Activated CD4-positive, alpha-beta T cell treated with anti-CD3 and anti-CD28 coated beads, Interleukin-2, amount 10 ng/mL, durations not matched to agents 24 days and 14 days (primary cell): ENCODE measurements at regions of chr20 and their contacts with region 1.

Region 1: GRCh38 chr20:3767427-3768341 is at the start of gene ADISSP:
- DNase-seq: peak; percentile 99
- H3K4me3 Mint-ChIP-seq: peak within 1 kb of the TSS; percentile 81
- H3K27ac Mint-ChIP-seq: peak within 1 kb of the TSS; percentile 97
- H3K4me1 Mint-ChIP-seq: peaks cover 22% of the 10 kb centered on the region
- H3K27me3 Mint-ChIP-seq: peaks cover 9% of the 10 kb centered on the region
- total RNA-seq, gene ADISSP: 62.9 and 68.8 TPM in 2 replicates

Region 2: DNA sequence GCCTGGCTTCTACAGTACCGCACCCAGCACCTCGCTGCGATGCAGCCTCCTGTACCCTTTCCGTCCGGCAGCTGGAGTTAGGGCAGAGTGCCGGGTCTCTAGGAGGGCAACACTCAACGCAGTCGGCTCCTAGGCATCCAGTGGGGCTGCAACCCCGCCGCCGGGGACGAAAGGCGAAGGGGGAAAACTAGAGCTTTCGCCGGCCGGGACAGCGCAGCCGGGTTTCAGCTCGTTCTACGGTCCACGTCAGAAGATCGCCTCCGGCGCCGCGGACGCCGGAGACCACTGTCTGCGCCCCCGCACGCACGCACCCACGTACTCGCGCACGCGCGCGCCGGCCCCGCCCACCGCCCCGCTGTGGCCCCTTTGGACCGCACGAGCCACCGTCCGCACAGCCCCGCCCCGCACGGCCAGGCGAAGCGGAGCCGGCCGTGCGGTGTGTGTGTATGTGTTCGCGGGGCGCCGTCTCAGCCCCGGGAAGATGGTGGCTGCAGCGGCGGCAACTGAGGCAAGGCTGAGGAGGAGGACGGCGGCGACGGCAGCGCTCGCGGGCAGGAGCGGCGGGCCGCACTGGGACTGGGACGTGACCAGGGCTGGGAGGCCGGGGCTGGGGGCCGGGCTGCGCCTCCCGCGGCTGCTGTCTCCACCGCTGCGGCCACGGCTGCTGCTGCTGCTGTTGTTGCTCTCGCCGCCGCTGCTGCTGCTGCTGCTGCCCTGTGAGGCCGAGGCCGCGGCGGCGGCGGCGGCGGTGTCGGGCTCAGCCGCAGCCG is 296.9 kb before region 1 on chr20 and contains the start of gene ATRN:
- intact Hi-C with region 1: loop called (anchors 5 kb)
- DNase-seq: peak; percentile 97
- H3K4me3 Mint-ChIP-seq: peak within 1 kb of the TSS; percentile 95
- H3K27ac Mint-ChIP-seq: peak within 1 kb of the TSS; percentile 79
- H3K4me1 Mint-ChIP-seq: peaks cover 26% of the 10 kb centered on the region
- H3K27me3 Mint-ChIP-seq: peaks cover 15% of the 10 kb centered on the region
- total RNA-seq, gene ATRN: 11.8 and 12.1 TPM in 2 replicates

Region 3: GRCh38 chr20:3572151-3572550 is 195.5 kb before region 1 on chr20:
- intact Hi-C with region 1: no loop called
- DNase-seq: no peak
- H3K4me3 Mint-ChIP-seq: no peak overlapping the region
- H3K27ac Mint-ChIP-seq: no peak overlapping the region
- H3K4me1 Mint-ChIP-seq: no peaks in the 10 kb centered on the region
- H3K27me3 Mint-ChIP-seq: no peaks in the 10 kb centered on the region

Region 4: DNA sequence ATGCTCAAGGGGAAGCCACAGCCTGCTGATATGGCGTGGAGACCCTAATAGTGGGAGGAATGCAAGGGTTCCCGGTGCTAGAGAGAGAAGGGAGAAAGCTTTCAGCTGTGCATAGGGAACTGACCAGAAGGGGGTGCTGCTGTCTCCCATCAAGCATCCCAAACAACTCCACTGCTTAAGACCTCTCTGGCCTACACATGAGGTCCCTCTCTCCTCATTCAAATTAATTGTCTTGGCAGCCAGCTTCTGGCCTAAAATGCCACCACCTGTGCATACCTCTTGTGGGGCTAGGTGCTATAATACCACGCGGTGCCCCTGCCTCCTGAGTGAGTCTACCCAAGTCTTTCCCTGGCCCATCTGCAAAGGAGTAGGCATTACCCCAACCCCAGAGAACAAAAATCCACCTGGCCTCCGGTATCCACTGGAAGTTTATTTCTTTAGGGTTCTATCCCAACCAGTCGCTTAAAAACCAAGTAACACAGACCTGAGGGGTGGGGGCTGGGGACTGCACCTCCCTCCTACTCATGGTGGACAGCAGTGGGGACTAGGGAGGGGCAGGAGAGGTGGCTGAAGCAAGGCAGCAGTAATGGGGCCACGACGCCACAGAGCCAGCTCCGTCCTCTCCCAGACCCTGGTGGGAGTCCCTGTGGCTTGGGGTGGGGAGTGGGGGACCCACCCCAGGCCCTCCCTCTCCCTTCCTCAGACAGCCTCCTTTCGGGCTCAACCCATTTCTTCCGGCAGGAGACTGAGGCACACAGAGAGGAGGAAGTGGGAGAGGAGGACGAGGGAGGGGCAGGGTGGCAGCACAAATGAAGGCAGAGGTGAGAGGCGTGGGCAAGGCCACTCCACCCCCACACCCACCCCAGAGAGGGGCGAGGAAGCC is 14.3 kb before region 1 on chr20:
- intact Hi-C with region 1: loop called (anchors 2 kb)
- DNase-seq: peak; percentile 88
- H3K4me3 Mint-ChIP-seq: no peak overlapping the region
- H3K27ac Mint-ChIP-seq: no peak overlapping the region
- H3K4me1 Mint-ChIP-seq: peaks cover 8% of the 10 kb centered on the region
- H3K27me3 Mint-ChIP-seq: peaks cover 1% of the 10 kb centered on the region

Region 5: GRCh38 chr20:3781153-3781910 is 13.6 kb after region 1 on chr20 and contains the start of gene SPEF1:
- intact Hi-C with region 1: loop called (anchors 1 kb)
- DNase-seq: peak; percentile 84
- H3K4me3 Mint-ChIP-seq: peak within 1 kb of the TSS; percentile 76
- H3K27ac Mint-ChIP-seq: no peak within 1 kb of the TSS
- H3K4me1 Mint-ChIP-seq: peaks cover 42% of the 10 kb centered on the region
- H3K27me3 Mint-ChIP-seq: peaks cover 22% of the 10 kb centered on the region
- total RNA-seq, gene SPEF1: not detected in 2 replicates

Region 6: GRCh38 chr20:3795511-3796468 is 28.1 kb after region 1 on chr20 and contains the start of gene CDC25B:
- intact Hi-C with region 1: loop called (anchors 1 kb)
- DNase-seq: peak; percentile 96
- H3K4me3 Mint-ChIP-seq: peak within 1 kb of the TSS; percentile 97
- H3K27ac Mint-ChIP-seq: peak within 1 kb of the TSS; percentile 96
- H3K4me1 Mint-ChIP-seq: peaks cover 44% of the 10 kb centered on the region
- H3K27me3 Mint-ChIP-seq: no peaks in the 10 kb centered on the region
- total RNA-seq, gene CDC25B: 70.7 and 75.5 TPM in 2 replicates

Region 7: GRCh38 chr20:3846740-3847428 is 79.2 kb after region 1 on chr20 and contains the start of gene MAVS:
- intact Hi-C with region 1: loop called (anchors 1 kb)
- DNase-seq: peak; percentile 97
- H3K4me3 Mint-ChIP-seq: peak within 1 kb of the TSS; percentile 92
- H3K27ac Mint-ChIP-seq: peak within 1 kb of the TSS; percentile 90
- H3K4me1 Mint-ChIP-seq: peaks cover 21% of the 10 kb centered on the region
- H3K27me3 Mint-ChIP-seq: no peaks in the 10 kb centered on the region
- total RNA-seq, gene MAVS: 39.3 and 40.2 TPM in 2 replicates